ENCODE measurements at regions of chr19 and their contacts with region 1.

Region 1: DNA sequence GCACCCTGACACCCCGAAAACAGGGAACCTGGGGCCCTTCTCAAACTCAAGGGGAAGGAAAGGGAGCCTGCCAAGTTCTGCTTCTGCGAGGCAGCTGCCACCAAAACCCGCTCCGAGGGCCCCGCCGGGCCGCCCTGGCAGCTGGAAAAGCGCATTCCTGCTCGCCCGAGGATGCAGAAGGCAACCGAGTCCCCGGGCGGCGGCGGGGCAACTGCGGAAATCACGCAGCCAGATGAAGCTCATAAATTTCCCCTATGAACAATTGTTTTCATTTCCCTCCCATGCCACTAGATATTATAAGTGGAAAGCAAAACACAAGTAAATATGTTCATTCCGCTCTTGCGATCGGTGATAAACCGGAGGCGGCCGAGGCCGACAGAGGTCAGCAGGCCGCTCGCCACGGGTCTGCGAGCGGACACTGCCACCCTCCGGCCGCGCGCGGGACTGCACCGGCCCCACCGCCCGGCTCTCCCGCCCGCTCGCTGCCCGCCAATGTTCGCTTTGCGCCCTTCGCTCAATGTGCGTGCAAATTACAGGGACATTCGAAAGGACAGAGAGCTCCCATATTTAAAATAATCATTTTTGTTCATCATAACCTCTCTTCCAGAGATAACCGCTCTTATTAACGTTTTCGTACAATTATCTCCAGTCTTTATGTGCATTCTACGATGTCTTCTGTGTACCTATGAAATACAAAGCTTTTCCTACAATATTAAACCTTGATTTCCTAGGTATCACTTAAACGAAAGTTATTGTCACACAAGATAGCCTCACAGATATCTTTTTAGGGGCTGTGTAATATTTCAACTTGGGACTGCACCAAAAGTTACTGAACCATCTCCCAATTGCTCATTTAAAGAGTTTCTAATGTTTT is 120.8 kb upstream of the ZNF507 start:
- DNase-seq: peak; percentile 12 to 39 (median 31)
- H3K4me3 ChIP-seq: peak overlapping the region in 1 of 3 experiments; percentile 50
- H3K4me3 Mint-ChIP-seq: peak overlapping the region; percentile 71 to 95
- H3K27ac ChIP-seq: no peak overlapping the region
- H3K27ac Mint-ChIP-seq: no peak overlapping the region
- H3K4me1 ChIP-seq: peaks cover 7 to 9% of the 10 kb centered on the region in 2 donors
- H3K4me1 Mint-ChIP-seq: peaks cover 4% of the 10 kb centered on the region
- H3K27me3 ChIP-seq: peaks cover 20 to 42% of the 10 kb centered on the region in 2 donors
- H3K27me3 Mint-ChIP-seq: peaks cover 31 to 46% (median 45%) of the 10 kb centered on the region in 3 donors
- CTCF ChIP-seq: peak; percentile 100

Region 2: DNA sequence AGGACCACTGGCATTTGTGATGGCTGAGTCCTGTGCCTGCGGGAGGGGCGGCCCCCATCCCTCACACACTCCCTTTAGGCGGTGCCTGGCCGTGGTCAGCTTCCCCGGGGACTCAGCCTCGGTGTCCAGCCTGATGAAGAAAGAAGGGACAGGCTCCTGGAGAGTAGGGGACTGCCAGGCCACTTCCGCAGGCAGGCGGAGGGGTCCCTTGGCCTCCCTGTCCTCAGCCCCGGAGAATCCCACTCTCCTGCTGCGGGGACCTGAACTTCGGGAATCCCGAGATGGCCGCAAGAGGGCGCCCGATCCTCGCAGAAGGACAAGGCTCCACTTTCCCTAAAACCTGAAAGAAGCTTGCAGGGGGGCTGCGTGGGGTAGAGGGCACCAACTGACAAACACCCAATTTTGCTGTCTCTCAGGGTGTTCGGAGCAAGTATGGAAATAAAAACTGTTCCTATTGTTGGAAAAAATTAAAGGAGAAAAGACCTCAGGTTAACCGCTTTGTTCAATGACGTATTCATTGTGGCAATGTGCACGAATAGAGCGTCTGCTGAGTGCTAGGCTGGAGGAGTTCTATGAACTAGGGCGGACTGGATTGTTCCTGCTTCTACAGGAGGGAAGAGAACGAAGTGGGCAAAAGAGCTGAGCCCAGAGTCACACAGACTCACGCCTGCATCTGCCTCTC is 1555.1 kb before region 1 on chr19:
- intact Hi-C with region 1: loop called (anchors 2 to 5 kb)
- DNase-seq: peak in 2 of 3 donors; percentile 2 to 31
- H3K4me3 ChIP-seq: no peak overlapping the region
- H3K4me3 Mint-ChIP-seq: peak overlapping the region in 1 of 2 donors; percentile 57
- H3K27ac ChIP-seq: no peak overlapping the region
- H3K27ac Mint-ChIP-seq: peak overlapping the region in 1 of 7 donors; percentile 75
- H3K4me1 ChIP-seq: no peaks in the 10 kb centered on the region
- H3K4me1 Mint-ChIP-seq: no peaks in the 10 kb centered on the region
- H3K27me3 ChIP-seq: peaks cover 0 to 3% of the 10 kb centered on the region in 2 donors
- H3K27me3 Mint-ChIP-seq: peaks cover 5 to 17% (median 11%) of the 10 kb centered on the region in 3 donors
- CTCF ChIP-seq: peak; percentile 81

Region 3: GRCh38 chr19:30682999-30683536 is 1541.5 kb before region 1 on chr19:
- intact Hi-C with region 1: loop called (anchors 5 kb)
- DNase-seq: peak; percentile 6 to 41 (median 28)
- H3K4me3 ChIP-seq: no peak overlapping the region
- H3K4me3 Mint-ChIP-seq: no peak overlapping the region
- H3K27ac ChIP-seq: no peak overlapping the region
- H3K27ac Mint-ChIP-seq: no peak overlapping the region
- H3K4me1 ChIP-seq: peaks cover 0 to 4% of the 10 kb centered on the region in 2 donors
- H3K4me1 Mint-ChIP-seq: peaks cover 3% of the 10 kb centered on the region
- H3K27me3 ChIP-seq: peaks cover 0 to 10% of the 10 kb centered on the region in 2 donors
- H3K27me3 Mint-ChIP-seq: peaks cover 21 to 29% (median 26%) of the 10 kb centered on the region in 3 donors
- CTCF ChIP-seq: peak; percentile 75

Region 4: GRCh38 chr19:30784850-30785457 is 1439.7 kb before region 1 on chr19:
- intact Hi-C with region 1: loop called (anchors 2 kb)
- DNase-seq: peak; percentile 54 to 70 (median 59)
- H3K4me3 ChIP-seq: no peak overlapping the region
- H3K4me3 Mint-ChIP-seq: no peak overlapping the region
- H3K27ac ChIP-seq: no peak overlapping the region
- H3K27ac Mint-ChIP-seq: peak overlapping the region in 3 of 7 donors; percentile 2 to 81 (median 15)
- H3K4me1 ChIP-seq: peaks cover 21 to 26% of the 10 kb centered on the region in 2 donors
- H3K4me1 Mint-ChIP-seq: peaks cover 33% of the 10 kb centered on the region
- H3K27me3 ChIP-seq: no peaks in the 10 kb centered on the region
- H3K27me3 Mint-ChIP-seq: peaks cover 3 to 8% (median 3%) of the 10 kb centered on the region in 3 donors
- CTCF ChIP-seq: peak; percentile 86

Region 5: GRCh38 chr19:32201636-32202051 is 23.0 kb before region 1 on chr19:
- intact Hi-C with region 1: no loop called
- DNase-seq: no peak
- H3K4me3 ChIP-seq: no peak overlapping the region
- H3K4me3 Mint-ChIP-seq: peak overlapping the region in 1 of 2 donors; percentile 39
- H3K27ac ChIP-seq: no peak overlapping the region
- H3K27ac Mint-ChIP-seq: peak overlapping the region in 2 of 7 donors; percentile 20 to 75
- H3K4me1 ChIP-seq: peaks cover 8 to 11% of the 10 kb centered on the region in 2 donors
- H3K4me1 Mint-ChIP-seq: peaks cover 15% of the 10 kb centered on the region
- H3K27me3 ChIP-seq: no peaks in the 10 kb centered on the region
- H3K27me3 Mint-ChIP-seq: peaks cover 6 to 8% (median 7%) of the 10 kb centered on the region in 3 donors
- CTCF ChIP-seq: no peak